PC-9 (cell line): ENCODE measurements at regions of chr14 and their contacts with region 1.

Region 1: GRCh38 chr14:102501751-102502315 is 7.7 kb downstream of the ANKRD9 start:
- DNase-seq: no peak
- H3K4me3 ChIP-seq: no peak overlapping the region
- H3K27ac ChIP-seq: no peak overlapping the region
- H3K4me1 ChIP-seq: no peaks in the 10 kb centered on the region
- H3K27me3 ChIP-seq: no peaks in the 10 kb centered on the region
- CTCF ChIP-seq: peak; percentile 49; the same call in 1 of the 2 replicates

Region 2: DNA sequence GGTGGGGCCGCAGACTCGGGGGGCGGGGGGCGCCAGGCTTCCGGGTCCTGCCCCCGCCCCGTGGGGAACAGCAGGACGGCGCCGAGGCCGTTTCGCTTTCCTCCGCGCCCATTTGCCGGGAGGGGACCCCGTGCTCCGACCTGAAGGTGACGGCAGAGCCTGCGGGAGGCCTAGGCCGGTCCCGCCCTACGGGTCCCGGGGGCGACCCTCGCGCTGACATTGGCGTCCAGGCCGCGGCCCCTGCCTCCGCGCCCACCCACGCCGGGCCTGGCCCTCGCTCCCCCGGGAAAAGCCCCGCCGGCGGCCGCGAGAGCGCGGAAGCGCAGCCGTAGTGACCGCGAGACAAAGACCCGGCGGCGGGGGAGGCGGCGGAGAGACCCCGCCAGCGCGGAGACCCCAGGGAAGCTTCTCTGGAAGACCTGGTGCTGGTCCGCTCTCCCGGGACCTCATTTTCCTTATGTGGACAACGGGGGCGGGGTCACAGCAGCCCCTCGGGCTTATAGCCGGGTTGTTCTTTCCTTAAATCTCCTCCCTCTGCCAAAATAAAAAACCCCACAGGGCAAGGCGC is 53.5 kb after region 1 on chr14:
- CTCF ChIA-PET with region 1: no interaction called
- POLR2A ChIA-PET with region 1: no interaction called
- intact Hi-C with region 1: no loop called
- DNase-seq: no peak
- H3K4me3 ChIP-seq: no peak overlapping the region
- H3K27ac ChIP-seq: no peak overlapping the region
- H3K4me1 ChIP-seq: peaks cover 31% of the 10 kb centered on the region
- H3K27me3 ChIP-seq: no peaks in the 10 kb centered on the region
- CTCF ChIP-seq: no peak

Region 3: GRCh38 chr14:102606296-102606695 is 104.5 kb after region 1 on chr14:
- CTCF ChIA-PET with region 1: interaction called, 13 read pairs
- POLR2A ChIA-PET with region 1: no interaction called
- intact Hi-C with region 1: no loop called
- DNase-seq: no peak
- H3K4me3 ChIP-seq: no peak overlapping the region
- H3K27ac ChIP-seq: no peak overlapping the region
- H3K4me1 ChIP-seq: peaks cover 29% of the 10 kb centered on the region
- H3K27me3 ChIP-seq: no peaks in the 10 kb centered on the region
- CTCF ChIP-seq: no peak

Region 4: GRCh38 chr14:102893452-102893851 is 391.6 kb after region 1 on chr14:
- CTCF ChIA-PET with region 1: no interaction called
- POLR2A ChIA-PET with region 1: no interaction called
- intact Hi-C with region 1: no loop called
- DNase-seq: no peak
- H3K4me3 ChIP-seq: no peak overlapping the region
- H3K27ac ChIP-seq: no peak overlapping the region
- H3K4me1 ChIP-seq: no peaks in the 10 kb centered on the region
- H3K27me3 ChIP-seq: no peaks in the 10 kb centered on the region
- CTCF ChIP-seq: no peak